PC-3 (cell line): ENCODE measurements at regions of chr14 and their contacts with region 1.

Region 1: GRCh38 chr14:99604283-99604765 is 317 bp upstream of the CCDC85C start:
- DNase-seq: peak; percentile 98
- ATAC-seq: peak; percentile 81
- H3K4me3 ChIP-seq: peak overlapping the region; percentile 92
- H3K27ac ChIP-seq: peak overlapping the region; percentile 25; the same call in 1 of the 2 replicates
- H3K4me1 ChIP-seq: peaks cover 19% of the 10 kb centered on the region
- H3K27me3 ChIP-seq: no peaks in the 10 kb centered on the region
- CTCF ChIP-seq: no peak

Region 2: DNA sequence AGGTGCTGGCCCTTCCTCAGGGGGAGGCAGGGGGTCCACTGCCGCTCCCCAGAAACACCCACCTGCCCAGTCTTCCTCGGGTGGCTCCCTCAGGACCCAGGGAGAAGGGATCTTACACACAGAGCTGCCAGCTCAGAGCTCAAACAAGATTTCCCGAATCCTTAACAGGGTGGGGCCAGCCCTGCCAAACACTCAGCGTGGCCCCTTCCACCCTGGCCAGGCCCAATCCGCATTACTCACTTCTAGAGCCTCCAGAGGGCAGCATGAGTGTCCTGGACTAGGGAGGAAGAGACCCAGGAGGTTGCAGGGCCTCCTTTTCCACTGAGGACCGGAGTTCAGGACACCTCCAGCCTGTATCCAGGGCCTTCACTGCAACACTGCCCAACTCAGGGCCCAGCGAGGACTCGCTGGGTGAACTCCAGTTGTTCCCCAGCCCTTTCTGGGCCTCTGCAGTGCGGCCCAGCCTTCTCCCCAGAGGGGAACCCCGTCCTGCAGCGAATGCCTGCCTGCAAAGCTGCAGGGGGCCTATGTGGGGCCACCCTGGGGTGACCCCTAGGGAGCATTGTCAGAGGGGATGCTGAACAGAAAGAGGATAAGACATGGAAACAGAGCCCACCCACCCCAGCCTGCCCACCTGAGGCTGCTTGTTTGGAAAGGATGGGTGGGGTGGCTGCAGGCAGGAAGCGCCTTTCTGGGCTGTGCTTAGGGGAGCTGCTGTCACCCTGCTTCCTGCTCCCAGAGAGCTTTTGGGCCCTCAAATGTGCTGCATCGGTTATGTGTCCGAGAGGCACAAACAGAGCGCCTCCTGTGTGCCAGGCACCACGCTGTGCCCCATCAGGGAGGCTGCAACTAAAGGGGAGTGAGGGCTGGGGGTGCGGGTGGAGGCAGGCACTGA is 79.3 kb before region 1 on chr14:
- CTCF ChIA-PET with region 1: interaction called, 8 read pairs
- POLR2A ChIA-PET with region 1: no interaction called
- intact Hi-C with region 1: loop called (anchors 2 kb)
- DNase-seq: peak; percentile 81
- ATAC-seq: peak; percentile 82
- H3K4me3 ChIP-seq: peak overlapping the region; percentile 25; the same call in 1 of the 2 replicates
- H3K27ac ChIP-seq: peak overlapping the region; percentile 54
- H3K4me1 ChIP-seq: peaks cover 41% of the 10 kb centered on the region
- H3K27me3 ChIP-seq: no peaks in the 10 kb centered on the region
- CTCF ChIP-seq: peak; percentile 58

Region 3: GRCh38 chr14:99575043-99576023 is 29.0 kb before region 1 on chr14:
- CTCF ChIA-PET with region 1: interaction called, 4 read pairs
- POLR2A ChIA-PET with region 1: no interaction called
- intact Hi-C with region 1: loop called (anchors 2 kb)
- DNase-seq: peak; percentile 92
- ATAC-seq: peak; percentile 65
- H3K4me3 ChIP-seq: peak overlapping the region; percentile 26; the same call in 1 of the 2 replicates
- H3K27ac ChIP-seq: peak overlapping the region; percentile 67
- H3K4me1 ChIP-seq: peaks cover 60% of the 10 kb centered on the region
- H3K27me3 ChIP-seq: no peaks in the 10 kb centered on the region
- CTCF ChIP-seq: peak; percentile 48; the same call in 1 of the 2 replicates

Region 4: GRCh38 chr14:99633918-99634317 is 29.6 kb after region 1 on chr14:
- CTCF ChIA-PET with region 1: no interaction called
- POLR2A ChIA-PET with region 1: no interaction called
- intact Hi-C with region 1: no loop called
- DNase-seq: no peak
- ATAC-seq: no peak
- H3K4me3 ChIP-seq: no peak overlapping the region
- H3K27ac ChIP-seq: no peak overlapping the region
- H3K4me1 ChIP-seq: no peaks in the 10 kb centered on the region
- H3K27me3 ChIP-seq: no peaks in the 10 kb centered on the region
- CTCF ChIP-seq: no peak

Region 5: GRCh38 chr14:99683619-99684355 is 79.5 kb after region 1 on chr14 and contains the start of gene CYP46A1:
- CTCF ChIA-PET with region 1: no interaction called
- POLR2A ChIA-PET with region 1: no interaction called
- intact Hi-C with region 1: no loop called
- DNase-seq: peak; percentile 99
- ATAC-seq: peak; percentile 84
- H3K4me3 ChIP-seq: peak within 1 kb of the TSS; percentile 89
- H3K27ac ChIP-seq: peak within 1 kb of the TSS; percentile 29; the same call in 1 of the 2 replicates
- H3K4me1 ChIP-seq: peaks cover 4% of the 10 kb centered on the region; the same call in 1 of the 2 replicates
- H3K27me3 ChIP-seq: no peaks in the 10 kb centered on the region
- CTCF ChIP-seq: no peak
- total RNA-seq, gene CYP46A1: 0.52 and 1.2 TPM in 2 replicates